Right lobe of liver (tissue), 6 donors: ENCODE measurements at regions of chr10 and their contacts with region 1.

Region 1: GRCh38 chr10:70758757-70759514 is 26.2 kb downstream of the TBATA start:
- DNase-seq: peak in 2 of 3 donors; percentile 49 to 66
- ATAC-seq: peak; percentile 49 to 76 (median 67)
- H3K4me3 ChIP-seq: no peak overlapping the region
- H3K27ac ChIP-seq: no peak overlapping the region
- H3K4me1 ChIP-seq: peaks cover 0 to 14% (median 0%) of the 10 kb centered on the region in 4 donors
- H3K27me3 ChIP-seq: no peaks in the 10 kb centered on the region
- CTCF ChIP-seq: peak; percentile 56 to 82 (median 64)
- POLR2A ChIP-seq: no peak

Region 2: DNA sequence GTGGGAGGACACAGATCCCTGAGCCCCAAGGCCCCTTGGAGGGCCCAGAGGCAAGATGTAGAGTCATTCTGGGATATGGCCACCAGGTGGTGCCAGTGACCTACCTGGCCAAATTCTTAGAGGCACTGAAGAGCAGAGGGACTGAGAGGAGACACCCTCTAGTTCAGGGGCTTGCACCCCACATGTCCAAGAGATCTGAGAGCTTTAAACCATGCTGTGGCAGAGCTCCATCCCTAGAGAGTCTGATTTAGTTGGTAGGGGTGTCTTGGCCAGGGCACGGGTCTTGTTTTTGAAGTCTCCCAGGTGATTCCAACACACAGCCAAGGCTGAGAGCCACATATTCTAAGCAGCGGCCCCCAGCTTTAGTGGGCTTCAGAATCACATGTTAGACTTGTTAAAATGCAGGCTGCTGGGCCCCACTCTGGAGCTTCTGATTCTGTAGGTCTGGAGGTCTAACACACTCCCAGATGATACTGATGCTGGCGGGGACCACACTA is 208.9 kb before region 1 on chr10:
- intact Hi-C with region 1: loop called (anchors 5 kb)
- DNase-seq: peak in 1 of 3 donors; percentile 68
- ATAC-seq: peak; percentile 79 to 93 (median 90)
- H3K4me3 ChIP-seq: no peak overlapping the region
- H3K27ac ChIP-seq: no peak overlapping the region
- H3K4me1 ChIP-seq: no peaks in the 10 kb centered on the region
- H3K27me3 ChIP-seq: no peaks in the 10 kb centered on the region
- CTCF ChIP-seq: peak; percentile 74 to 91 (median 86)
- POLR2A ChIP-seq: no peak

Region 3: DNA sequence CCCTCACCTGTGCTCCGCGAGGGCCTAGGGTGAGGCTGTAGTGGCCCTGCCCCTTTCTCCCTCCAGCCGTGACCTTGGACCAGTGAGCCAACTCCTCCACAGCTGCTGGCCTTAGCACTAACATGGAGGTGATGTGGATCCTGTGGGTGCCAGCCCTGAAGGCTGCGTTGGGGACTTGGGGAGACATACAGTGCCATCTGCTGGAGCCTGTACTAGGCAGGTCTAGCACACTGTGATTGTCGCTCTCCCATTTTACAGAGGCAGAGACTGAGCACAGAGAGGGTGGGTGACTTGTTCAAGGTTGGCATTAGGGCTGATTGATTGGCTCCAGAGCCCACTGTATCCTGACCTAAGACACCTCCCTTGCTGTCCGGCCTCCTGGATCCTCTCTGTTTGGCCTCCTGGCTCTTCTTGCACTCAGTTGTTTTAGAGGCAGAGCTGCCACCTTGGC is 194.0 kb before region 1 on chr10:
- intact Hi-C with region 1: no loop called
- DNase-seq: peak in 1 of 3 donors; percentile 16
- ATAC-seq: peak in 1 of 4 donors; percentile 25
- H3K4me3 ChIP-seq: no peak overlapping the region
- H3K27ac ChIP-seq: no peak overlapping the region
- H3K4me1 ChIP-seq: no peaks in the 10 kb centered on the region
- H3K27me3 ChIP-seq: no peaks in the 10 kb centered on the region
- CTCF ChIP-seq: peak in 1 of 4 donors; percentile 7
- POLR2A ChIP-seq: no peak